ENCODE measurements at regions of chr17 and their contacts with region 1.

Region 1: DNA sequence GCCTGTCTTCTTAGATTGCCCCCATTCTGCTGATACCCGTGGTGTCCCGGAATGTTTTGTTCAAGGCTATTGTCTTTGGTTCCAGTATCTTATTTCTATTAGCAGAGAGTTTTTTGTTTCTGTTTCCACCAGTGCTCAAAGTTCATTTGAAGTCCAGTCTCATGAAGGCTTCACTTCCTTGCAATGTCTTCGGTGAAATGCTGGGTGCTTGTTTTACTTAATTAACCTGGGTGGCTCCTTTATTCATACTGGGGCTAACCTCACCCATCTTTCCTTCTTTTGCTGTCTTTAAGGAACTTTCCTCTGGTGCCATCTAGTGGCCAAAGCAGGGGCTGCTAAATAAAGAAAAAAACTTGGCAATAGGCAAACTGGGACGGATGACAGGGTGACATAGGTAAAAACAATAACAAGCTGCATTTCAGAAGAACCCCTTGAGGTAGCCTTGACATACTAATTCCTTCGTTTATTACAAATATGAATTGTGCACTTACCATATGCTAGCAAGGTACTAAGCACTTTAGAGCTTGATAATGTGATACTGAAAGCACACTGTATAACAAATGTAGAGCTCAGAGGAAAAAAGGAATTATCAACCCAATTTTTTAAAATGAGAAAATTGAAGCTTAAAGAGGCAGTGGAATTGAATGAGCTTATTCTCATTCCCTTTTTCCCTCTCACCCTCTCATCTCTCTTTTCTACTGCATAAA is 2.8 kb upstream of the SMIM36 start:
- DNase-seq: peak in 1 of 2 donors; percentile 74
- ATAC-seq: peak in 7 of 8 donors; percentile 49 to 78 (median 55)
- H3K4me3 ChIP-seq: no peak overlapping the region
- H3K27ac ChIP-seq: no peak overlapping the region
- H3K4me1 ChIP-seq: peaks cover 0 to 7% (median 0%) of the 10 kb centered on the region in 9 donors
- H3K27me3 ChIP-seq: peaks cover 0 to 11% (median under 1%) of the 10 kb centered on the region in 7 donors
- CTCF ChIP-seq: peak; percentile 88 to 95 (median 93)

Region 2: GRCh38 chr17:54982399-54982798 is 531.6 kb before region 1 on chr17:
- intact Hi-C with region 1: loop called in 1 of 10 experiments (anchors 10 kb)
- DNase-seq: no peak
- ATAC-seq: no peak
- H3K4me3 ChIP-seq: no peak overlapping the region
- H3K27ac ChIP-seq: no peak overlapping the region
- H3K4me1 ChIP-seq: peaks cover 0 to 6% (median 0%) of the 10 kb centered on the region in 9 donors
- H3K27me3 ChIP-seq: no peaks in the 10 kb centered on the region
- CTCF ChIP-seq: no peak

Region 3: GRCh38 chr17:55356434-55357328 is 157.4 kb before region 1 on chr17:
- intact Hi-C with region 1: loop called (anchors 2 to 10 kb)
- DNase-seq: peak; percentile 23 to 68
- ATAC-seq: peak in 7 of 8 donors; percentile 64 to 83 (median 74)
- H3K4me3 ChIP-seq: no peak overlapping the region
- H3K27ac ChIP-seq: no peak overlapping the region
- H3K4me1 ChIP-seq: no peaks in the 10 kb centered on the region
- H3K27me3 ChIP-seq: no peaks in the 10 kb centered on the region
- CTCF ChIP-seq: peak; percentile 41 to 86 (median 79)

Region 4: DNA sequence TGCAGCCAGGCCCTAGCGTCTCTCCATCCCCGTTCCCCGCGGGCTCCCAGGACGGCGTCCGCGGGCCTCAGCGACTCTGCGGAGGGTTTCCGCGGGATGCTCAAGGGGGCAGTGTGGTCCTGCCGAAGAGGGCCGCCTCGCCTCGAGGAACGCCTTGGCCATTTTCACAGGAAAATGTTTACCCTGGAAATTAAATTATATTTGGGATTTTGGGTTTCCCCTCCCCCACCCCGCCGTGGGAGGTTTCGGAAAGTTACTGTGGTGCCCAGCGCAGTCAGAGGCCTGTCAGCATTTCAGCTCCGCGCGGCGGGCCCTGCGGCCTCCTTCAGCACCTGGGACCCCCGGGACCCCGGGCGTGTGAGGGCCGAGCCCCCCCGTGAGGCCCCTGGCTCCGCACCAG is 331.3 kb after region 1 on chr17:
- intact Hi-C with region 1: no loop called
- DNase-seq: peak; percentile 37 to 51
- ATAC-seq: peak; percentile 71 to 91 (median 84)
- H3K4me3 ChIP-seq: peak overlapping the region in 7 of 10 donors; percentile 6 to 39 (median 36)
- H3K27ac ChIP-seq: no peak overlapping the region
- H3K4me1 ChIP-seq: peaks cover 0 to 7% (median 0%) of the 10 kb centered on the region in 9 donors
- H3K27me3 ChIP-seq: no peaks in the 10 kb centered on the region
- CTCF ChIP-seq: peak in 8 of 9 donors; percentile 40 to 76 (median 60)

Measured in heart right ventricle (tissue), 16 donors.